ENCODE measurements at regions of chr2 and their contacts with region 1.

Region 1: GRCh38 chr2:70142590-70143313 is 48.1 kb downstream of the C2orf42 start:
- H3K4me3 Mint-ChIP-seq: peak overlapping the region; percentile 86
- H3K27ac Mint-ChIP-seq: peak overlapping the region; percentile 98
- H3K4me1 Mint-ChIP-seq: peaks cover 52% of the 10 kb centered on the region
- H3K27me3 Mint-ChIP-seq: no peaks in the 10 kb centered on the region

Region 2: DNA sequence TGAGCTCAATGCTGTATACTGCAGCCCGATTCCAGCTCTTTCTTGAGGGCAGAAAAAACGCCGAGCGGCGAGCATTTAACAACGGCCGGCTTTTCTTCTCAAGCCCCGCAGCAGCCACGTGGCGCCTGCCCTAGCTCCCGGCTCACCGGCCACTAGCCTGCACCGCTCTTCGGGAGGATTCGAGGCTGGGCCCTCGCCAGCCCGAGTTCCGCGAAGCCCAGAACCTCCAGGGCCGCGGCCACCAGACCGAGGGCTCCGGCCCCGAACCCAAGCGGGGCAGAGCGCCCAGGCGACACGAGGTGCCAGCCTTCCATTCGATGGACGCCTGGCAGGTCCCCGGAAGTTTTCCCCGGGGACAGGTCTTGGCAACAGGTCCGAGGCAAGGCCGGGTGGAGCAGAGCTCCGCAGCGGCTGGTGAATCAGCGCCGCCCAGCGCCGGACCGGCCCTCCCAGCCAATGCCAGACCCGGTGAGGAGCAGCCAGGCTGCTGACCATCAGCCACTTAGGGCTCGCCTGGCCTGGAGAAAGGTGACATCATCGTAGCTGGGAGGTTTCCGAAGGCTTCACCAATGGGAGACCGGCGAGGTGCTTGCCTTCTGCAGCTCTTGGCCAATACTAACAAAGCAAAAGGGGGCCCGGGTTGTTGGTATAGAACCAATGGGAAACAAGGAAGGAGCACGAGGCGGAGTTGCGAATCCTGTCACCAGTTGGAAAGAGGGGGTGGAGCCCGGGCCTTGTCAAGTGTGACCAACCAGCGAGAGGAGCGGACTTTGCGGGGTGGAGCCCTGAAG is 228.4 kb before region 1 on chr2:
- intact Hi-C with region 1: loop called (anchors 1 kb)
- H3K4me3 Mint-ChIP-seq: peak overlapping the region; percentile 83
- H3K27ac Mint-ChIP-seq: peak overlapping the region; percentile 91
- H3K4me1 Mint-ChIP-seq: peaks cover 15% of the 10 kb centered on the region
- H3K27me3 Mint-ChIP-seq: no peaks in the 10 kb centered on the region

Region 3: GRCh38 chr2:70070541-70071268 is 72.0 kb before region 1 on chr2:
- intact Hi-C with region 1: loop called (anchors 2 kb)
- H3K4me3 Mint-ChIP-seq: peak overlapping the region; percentile 20
- H3K27ac Mint-ChIP-seq: peak overlapping the region; percentile 90
- H3K4me1 Mint-ChIP-seq: peaks cover 38% of the 10 kb centered on the region
- H3K27me3 Mint-ChIP-seq: no peaks in the 10 kb centered on the region

Region 4: GRCh38 chr2:70086838-70087701 is 55.7 kb before region 1 on chr2 and contains the start of gene PCBP1:
- intact Hi-C with region 1: loop called (anchors 1 kb)
- H3K4me3 Mint-ChIP-seq: peak within 1 kb of the TSS; percentile 95
- H3K27ac Mint-ChIP-seq: peak within 1 kb of the TSS; percentile 99
- H3K4me1 Mint-ChIP-seq: peaks cover 56% of the 10 kb centered on the region
- H3K27me3 Mint-ChIP-seq: no peaks in the 10 kb centered on the region

Region 5: GRCh38 chr2:70124983-70125480 is 17.7 kb before region 1 on chr2:
- intact Hi-C with region 1: loop called (anchors 1 kb)
- H3K4me3 Mint-ChIP-seq: peak overlapping the region; percentile 74
- H3K27ac Mint-ChIP-seq: peak overlapping the region; percentile 100
- H3K4me1 Mint-ChIP-seq: peaks cover 85% of the 10 kb centered on the region
- H3K27me3 Mint-ChIP-seq: no peaks in the 10 kb centered on the region

Region 6: GRCh38 chr2:70132244-70133126 is 10.3 kb before region 1 on chr2:
- intact Hi-C with region 1: loop called (anchors 1 kb)
- H3K4me3 Mint-ChIP-seq: peak overlapping the region; percentile 57
- H3K27ac Mint-ChIP-seq: peak overlapping the region; percentile 97
- H3K4me1 Mint-ChIP-seq: peaks cover 75% of the 10 kb centered on the region
- H3K27me3 Mint-ChIP-seq: no peaks in the 10 kb centered on the region